CD4-positive, alpha-beta T cell (primary cell): ENCODE measurements at regions of chr11 and their contacts with region 1.

Region 1: GRCh38 chr11:65569973-65570918 is at the start of gene ZNRD2:
- DNase-seq: peak; percentile 96 to 100 (median 98)
- ATAC-seq: peak; percentile 71
- H3K4me3 ChIP-seq: peak within 1 kb of the TSS; percentile 89
- H3K4me3 Mint-ChIP-seq: peak within 1 kb of the TSS; percentile 100
- H3K27ac ChIP-seq: peak within 1 kb of the TSS; percentile 99 to 100
- H3K27ac Mint-ChIP-seq: peak within 1 kb of the TSS; percentile 98
- H3K4me1 ChIP-seq: peaks cover 87% of the 10 kb centered on the region
- H3K4me1 Mint-ChIP-seq: peaks cover 86% of the 10 kb centered on the region
- H3K27me3 ChIP-seq: no peaks in the 10 kb centered on the region
- H3K27me3 Mint-ChIP-seq: no peaks in the 10 kb centered on the region
- CTCF ChIP-seq: no peak
- total RNA-seq, gene ZNRD2: 38.7 to 39.9 TPM

Region 2: DNA sequence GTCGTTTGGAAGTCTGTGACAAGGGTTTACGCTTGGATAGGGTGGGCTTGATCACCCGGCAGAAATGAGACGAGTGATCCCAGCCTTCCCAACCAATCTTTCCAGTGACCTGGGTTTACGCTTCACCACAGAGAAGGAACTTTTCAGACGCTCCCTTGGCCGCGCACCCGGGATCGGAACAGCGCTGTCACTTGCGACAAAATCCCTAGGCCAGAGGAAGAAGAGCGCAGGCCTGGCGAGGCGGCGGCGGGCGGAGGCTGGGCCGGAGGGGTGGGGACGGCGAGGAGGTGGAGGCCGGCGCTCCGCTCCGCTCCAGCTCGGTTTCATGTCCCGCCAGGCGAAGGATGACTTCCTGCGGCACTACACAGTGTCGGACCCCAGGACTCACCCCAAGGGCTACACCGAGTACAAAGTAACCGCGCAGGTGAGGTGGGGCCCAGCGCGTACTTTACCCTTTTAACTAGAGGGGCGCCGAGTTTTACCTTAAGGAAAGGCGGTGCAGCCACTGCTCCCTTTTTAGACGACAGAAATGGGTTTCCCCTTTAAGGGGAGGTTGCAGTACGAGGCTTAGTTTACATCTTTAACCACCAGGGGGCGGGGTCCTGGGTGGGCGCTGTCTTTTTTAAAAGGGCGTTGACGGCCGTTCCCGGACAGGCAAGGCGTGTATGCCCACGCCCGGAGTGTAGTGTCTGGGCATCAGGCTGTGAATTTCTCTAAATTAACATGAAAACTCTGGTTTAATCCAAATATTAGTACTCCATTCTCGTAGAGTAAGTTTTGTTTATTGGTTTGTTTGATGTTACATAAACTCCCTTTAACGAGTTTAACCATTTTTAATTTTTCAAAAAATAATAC is 542.8 kb before region 1 on chr11 and contains the start of gene SNX15:
- CTCF ChIA-PET with region 1: no interaction called
- POLR2A ChIA-PET with region 1: no interaction called
- intact Hi-C with region 1: loop called in 1 of 2 experiments (anchors 5 kb)
- DNase-seq: peak; percentile 73 to 97 (median 86)
- ATAC-seq: peak; percentile 94
- H3K4me3 ChIP-seq: peak within 1 kb of the TSS; percentile 53
- H3K4me3 Mint-ChIP-seq: peak within 1 kb of the TSS; percentile 73
- H3K27ac ChIP-seq: peak within 1 kb of the TSS; percentile 22 to 52
- H3K27ac Mint-ChIP-seq: peak within 1 kb of the TSS; percentile 82
- H3K4me1 ChIP-seq: peaks cover 22% of the 10 kb centered on the region
- H3K4me1 Mint-ChIP-seq: peaks cover 21% of the 10 kb centered on the region
- H3K27me3 ChIP-seq: no peaks in the 10 kb centered on the region
- H3K27me3 Mint-ChIP-seq: no peaks in the 10 kb centered on the region
- CTCF ChIP-seq: peak; percentile 86
- total RNA-seq, gene SNX15: 13.9 to 14.7 TPM

Region 3: GRCh38 chr11:65524741-65525545 is 45.3 kb before region 1 on chr11 and contains the start of gene SCYL1:
- CTCF ChIA-PET with region 1: no interaction called
- POLR2A ChIA-PET with region 1: interaction called, 29 read pairs
- intact Hi-C with region 1: loop called in 1 of 2 experiments (anchors 10 kb)
- DNase-seq: peak; percentile 72 to 91 (median 81)
- ATAC-seq: peak; percentile 79
- H3K4me3 ChIP-seq: peak within 1 kb of the TSS; percentile 75
- H3K4me3 Mint-ChIP-seq: peak within 1 kb of the TSS; percentile 88
- H3K27ac ChIP-seq: peak within 1 kb of the TSS; percentile 60 to 84
- H3K27ac Mint-ChIP-seq: peak within 1 kb of the TSS; percentile 91
- H3K4me1 ChIP-seq: peaks cover 65% of the 10 kb centered on the region
- H3K4me1 Mint-ChIP-seq: peaks cover 58% of the 10 kb centered on the region
- H3K27me3 ChIP-seq: no peaks in the 10 kb centered on the region
- H3K27me3 Mint-ChIP-seq: no peaks in the 10 kb centered on the region
- CTCF ChIP-seq: no peak
- total RNA-seq, gene SCYL1: 57.4 to 60.7 TPM

Region 4: DNA sequence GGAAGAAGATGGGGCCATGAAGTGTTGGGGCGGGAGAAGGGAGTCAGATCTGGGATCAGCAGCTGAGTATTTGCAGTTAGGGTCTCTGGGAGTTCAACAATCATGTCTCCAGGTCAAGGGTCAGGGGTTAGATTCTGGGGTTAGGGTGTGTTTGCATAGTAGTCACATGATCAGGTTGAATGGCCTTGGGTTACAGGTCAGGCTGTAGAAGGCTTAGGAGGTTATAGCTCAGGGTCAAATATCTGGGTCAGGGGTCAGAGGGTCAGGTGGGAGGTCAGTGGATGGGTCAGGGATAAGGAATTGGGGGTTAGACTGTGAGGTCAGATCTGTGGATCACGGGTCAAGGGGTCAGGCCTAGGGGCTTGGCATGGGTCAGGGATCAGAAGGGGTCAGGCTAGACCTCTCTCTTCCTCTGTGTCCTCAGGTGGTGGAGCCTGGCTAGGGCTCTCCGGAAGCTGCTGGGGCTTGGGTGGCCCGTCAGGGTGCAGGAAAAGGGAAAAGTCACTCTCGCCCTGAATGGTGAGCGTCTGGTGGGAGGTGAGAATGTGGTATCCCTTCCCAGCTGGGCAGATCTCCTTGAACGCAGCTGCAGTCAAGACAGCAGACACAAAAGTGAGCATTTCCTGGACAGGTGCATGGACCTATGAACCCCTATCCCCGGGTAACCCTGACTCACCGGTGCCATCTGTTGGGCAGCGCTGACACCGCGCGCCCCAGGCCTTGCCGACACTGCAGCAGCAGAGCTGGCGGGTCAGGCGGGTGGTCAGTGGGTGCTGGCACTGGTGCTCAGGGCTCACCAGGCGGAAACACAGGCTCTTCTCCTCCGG is 18.5 kb before region 1 on chr11:
- CTCF ChIA-PET with region 1: interaction called, 13 read pairs
- POLR2A ChIA-PET with region 1: interaction called, 52 read pairs
- intact Hi-C with region 1: loop called in 1 of 2 experiments (anchors 2 kb)
- DNase-seq: peak; percentile 49 to 83 (median 64)
- ATAC-seq: peak; percentile 37
- H3K4me3 ChIP-seq: no peak overlapping the region
- H3K4me3 Mint-ChIP-seq: peak overlapping the region; percentile 71
- H3K27ac ChIP-seq: no peak overlapping the region
- H3K27ac Mint-ChIP-seq: peak overlapping the region; percentile 82
- H3K4me1 ChIP-seq: peaks cover 88% of the 10 kb centered on the region
- H3K4me1 Mint-ChIP-seq: peaks cover 83% of the 10 kb centered on the region
- H3K27me3 ChIP-seq: no peaks in the 10 kb centered on the region
- H3K27me3 Mint-ChIP-seq: no peaks in the 10 kb centered on the region
- CTCF ChIP-seq: peak; percentile 78

Region 5: GRCh38 chr11:65593518-65594298 is 23.5 kb after region 1 on chr11:
- CTCF ChIA-PET with region 1: interaction called, 31 read pairs
- POLR2A ChIA-PET with region 1: interaction called, 28 read pairs
- intact Hi-C with region 1: loop called (anchors 1 kb)
- DNase-seq: peak in 9 of 14 experiments; percentile 37 to 67 (median 43)
- ATAC-seq: peak; percentile 62
- H3K4me3 ChIP-seq: no peak overlapping the region
- H3K4me3 Mint-ChIP-seq: no peak overlapping the region
- H3K27ac ChIP-seq: no peak overlapping the region
- H3K27ac Mint-ChIP-seq: peak overlapping the region; percentile 36
- H3K4me1 ChIP-seq: peaks cover 31% of the 10 kb centered on the region
- H3K4me1 Mint-ChIP-seq: peaks cover 17% of the 10 kb centered on the region
- H3K27me3 ChIP-seq: no peaks in the 10 kb centered on the region
- H3K27me3 Mint-ChIP-seq: no peaks in the 10 kb centered on the region
- CTCF ChIP-seq: peak; percentile 66

Region 6: GRCh38 chr11:65630215-65630614 is 60.0 kb after region 1 on chr11:
- CTCF ChIA-PET with region 1: no interaction called
- POLR2A ChIA-PET with region 1: no interaction called
- intact Hi-C with region 1: no loop called
- DNase-seq: no peak
- ATAC-seq: no peak
- H3K4me3 ChIP-seq: no peak overlapping the region
- H3K4me3 Mint-ChIP-seq: no peak overlapping the region
- H3K27ac ChIP-seq: peak overlapping the region in 1 of 2 donors; percentile 10
- H3K27ac Mint-ChIP-seq: no peak overlapping the region
- H3K4me1 ChIP-seq: peaks cover 25% of the 10 kb centered on the region
- H3K4me1 Mint-ChIP-seq: peaks cover 23% of the 10 kb centered on the region
- H3K27me3 ChIP-seq: no peaks in the 10 kb centered on the region
- H3K27me3 Mint-ChIP-seq: no peaks in the 10 kb centered on the region
- CTCF ChIP-seq: no peak

Region 7: GRCh38 chr11:65662799-65663638 is 92.8 kb after region 1 on chr11 and contains the start of gene RELA:
- CTCF ChIA-PET with region 1: no interaction called
- POLR2A ChIA-PET with region 1: interaction called, 4 read pairs
- intact Hi-C with region 1: loop called in 1 of 2 experiments (anchors 5 kb)
- DNase-seq: peak; percentile 79 to 96 (median 89)
- ATAC-seq: peak; percentile 83
- H3K4me3 ChIP-seq: peak within 1 kb of the TSS; percentile 97
- H3K4me3 Mint-ChIP-seq: peak within 1 kb of the TSS; percentile 92
- H3K27ac ChIP-seq: peak within 1 kb of the TSS; percentile 96 to 97
- H3K27ac Mint-ChIP-seq: peak within 1 kb of the TSS; percentile 94
- H3K4me1 ChIP-seq: peaks cover 59% of the 10 kb centered on the region
- H3K4me1 Mint-ChIP-seq: peaks cover 33% of the 10 kb centered on the region
- H3K27me3 ChIP-seq: no peaks in the 10 kb centered on the region
- H3K27me3 Mint-ChIP-seq: no peaks in the 10 kb centered on the region
- CTCF ChIP-seq: no peak
- total RNA-seq, gene RELA: 379 to 382 TPM